Left ventricle myocardium superior (tissue), 1 donor: ENCODE measurements at regions of chr13 and their contacts with region 1.

Region 1: GRCh38 chr13:46831588-46832194 is 34.7 kb upstream of the ESD start:
- DNase-seq: no peak
- ATAC-seq: no peak

Region 2: GRCh38 chr13:46389457-46390451 is 441.9 kb before region 1 on chr13:
- intact Hi-C with region 1: no loop called
- DNase-seq: no peak
- ATAC-seq: peak; percentile 78

Region 3: GRCh38 chr13:47774671-47774994 is 942.9 kb after region 1 on chr13:
- intact Hi-C with region 1: loop called (anchors 5 kb)
- DNase-seq: no peak
- ATAC-seq: no peak